ENCODE measurements at regions of chr15 and their contacts with region 1.

Region 1: GRCh38 chr15:90071208-90071807 is 31.0 kb downstream of the IDH2 start:
- DNase-seq: peak; percentile 85
- H3K4me3 Mint-ChIP-seq: no peak overlapping the region
- H3K27ac Mint-ChIP-seq: no peak overlapping the region
- H3K4me1 Mint-ChIP-seq: peaks cover 5% of the 10 kb centered on the region
- H3K27me3 Mint-ChIP-seq: no peaks in the 10 kb centered on the region
- CTCF ChIP-seq: peak; percentile 77

Region 2: GRCh38 chr15:89912674-89913396 is 158.5 kb before region 1 on chr15 and contains the start of gene ARPIN:
- CTCF ChIA-PET with region 1: interaction called, 3 read pairs
- POLR2A ChIA-PET with region 1: interaction called, 9 read pairs
- intact Hi-C with region 1: loop called (anchors 5 kb)
- DNase-seq: peak; percentile 52
- H3K4me3 Mint-ChIP-seq: peak within 1 kb of the TSS; percentile 76
- H3K27ac Mint-ChIP-seq: no peak within 1 kb of the TSS
- H3K4me1 Mint-ChIP-seq: peaks cover 27% of the 10 kb centered on the region
- H3K27me3 Mint-ChIP-seq: no peaks in the 10 kb centered on the region
- CTCF ChIP-seq: no peak
- total RNA-seq, gene ARPIN: 7.1 and 9.9 TPM in 2 replicates

Region 3: DNA sequence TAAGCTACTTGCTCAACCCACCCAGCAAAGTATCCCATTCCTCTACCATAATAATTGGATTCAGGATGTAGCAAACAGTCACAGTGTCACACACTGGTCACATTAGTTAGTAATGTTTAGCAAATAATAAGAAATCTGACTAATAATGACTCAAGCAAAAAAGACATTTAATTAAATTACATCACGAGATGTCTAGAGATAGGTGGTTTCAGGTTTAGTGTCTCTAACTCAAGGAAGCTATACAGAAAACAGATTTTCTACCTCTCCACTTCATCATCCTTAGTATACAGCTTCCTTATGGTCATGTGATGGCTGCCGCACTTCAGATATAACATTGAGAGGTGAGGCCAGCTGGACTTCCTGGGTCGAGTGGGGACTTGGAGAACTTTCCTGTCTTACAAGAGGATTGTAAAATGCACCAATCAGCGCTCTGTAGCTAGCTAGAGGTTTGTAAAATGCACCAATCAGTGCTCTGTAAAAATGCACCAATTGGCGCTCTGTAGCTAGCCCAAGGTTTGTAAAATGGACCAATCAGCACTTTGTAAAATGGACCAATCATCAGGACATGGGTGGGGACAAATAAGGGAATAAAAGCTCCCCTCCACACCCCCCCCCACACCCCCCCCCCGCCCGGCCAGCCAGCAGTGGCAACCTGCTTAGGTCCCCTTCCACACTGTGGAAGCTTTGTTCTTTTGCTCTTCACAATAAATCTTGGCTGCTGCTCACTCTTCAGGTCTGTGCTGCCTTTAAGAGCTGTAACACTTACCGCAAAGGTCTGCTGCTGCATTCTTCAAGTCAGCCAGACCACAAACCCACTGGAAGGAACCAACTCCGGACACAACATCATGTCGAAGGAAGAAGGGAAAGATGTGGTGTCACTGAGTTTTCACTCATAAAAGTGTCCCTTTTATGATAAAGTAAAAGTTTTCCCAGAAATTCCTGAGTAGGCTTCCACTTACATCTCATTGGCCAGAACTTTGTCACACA is 133.7 kb before region 1 on chr15:
- CTCF ChIA-PET with region 1: interaction called, 10 read pairs
- POLR2A ChIA-PET with region 1: no interaction called
- intact Hi-C with region 1: no loop called
- DNase-seq: no peak
- H3K4me3 Mint-ChIP-seq: no peak overlapping the region
- H3K27ac Mint-ChIP-seq: no peak overlapping the region
- H3K4me1 Mint-ChIP-seq: no peaks in the 10 kb centered on the region
- H3K27me3 Mint-ChIP-seq: no peaks in the 10 kb centered on the region
- CTCF ChIP-seq: no peak

Region 4: DNA sequence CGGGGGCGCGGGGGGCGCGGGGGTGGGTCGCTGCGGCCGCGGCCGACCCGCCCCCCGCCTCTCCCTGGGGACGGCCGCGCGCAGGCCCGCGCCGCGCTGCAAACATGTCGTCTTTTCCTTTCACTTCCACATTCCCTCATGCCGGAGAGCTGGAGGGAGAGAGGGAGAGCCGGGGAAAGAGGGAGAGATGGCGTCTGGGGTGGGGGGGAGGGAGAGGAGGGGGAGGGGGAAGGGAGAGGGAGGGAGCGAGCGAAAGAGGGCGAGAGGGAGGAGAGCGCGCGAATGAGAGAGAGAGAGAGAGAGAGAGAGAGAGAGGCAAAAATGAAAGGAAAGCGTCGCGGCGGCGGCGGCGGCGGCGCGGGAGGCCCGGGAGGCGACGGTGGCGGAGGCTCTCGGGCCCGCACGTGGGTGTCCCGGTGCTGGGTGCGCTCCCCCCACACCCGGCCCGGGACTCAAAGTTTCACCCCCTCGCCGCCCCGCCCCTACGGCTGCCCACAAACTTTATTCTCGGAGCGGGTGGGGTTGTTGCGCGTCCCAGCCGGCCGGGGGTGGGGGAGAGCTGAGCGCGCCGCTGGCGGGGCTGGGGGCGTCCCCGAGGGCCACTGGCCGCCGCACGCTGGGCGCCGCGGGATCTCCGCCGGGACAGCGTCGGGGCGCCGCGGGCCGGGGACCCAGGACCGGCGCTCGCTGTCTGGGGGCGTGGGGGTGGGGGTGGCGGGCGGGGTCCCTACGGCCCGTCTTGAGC is 69.5 kb before region 1 on chr15:
- CTCF ChIA-PET with region 1: interaction called, 6 read pairs
- POLR2A ChIA-PET with region 1: interaction called, 49 read pairs
- intact Hi-C with region 1: loop called (anchors 1 kb)
- DNase-seq: peak; percentile 53
- H3K4me3 Mint-ChIP-seq: peak overlapping the region; percentile 92
- H3K27ac Mint-ChIP-seq: peak overlapping the region; percentile 93
- H3K4me1 Mint-ChIP-seq: peaks cover 51% of the 10 kb centered on the region
- H3K27me3 Mint-ChIP-seq: no peaks in the 10 kb centered on the region
- CTCF ChIP-seq: no peak

Region 5: GRCh38 chr15:90013503-90013937 is 57.8 kb before region 1 on chr15:
- CTCF ChIA-PET with region 1: interaction called, 10 read pairs
- POLR2A ChIA-PET with region 1: interaction called, 15 read pairs
- intact Hi-C with region 1: no loop called
- DNase-seq: no peak
- H3K4me3 Mint-ChIP-seq: no peak overlapping the region
- H3K27ac Mint-ChIP-seq: peak overlapping the region; percentile 43
- H3K4me1 Mint-ChIP-seq: peaks cover 34% of the 10 kb centered on the region
- H3K27me3 Mint-ChIP-seq: no peaks in the 10 kb centered on the region
- CTCF ChIP-seq: no peak

Region 6: DNA sequence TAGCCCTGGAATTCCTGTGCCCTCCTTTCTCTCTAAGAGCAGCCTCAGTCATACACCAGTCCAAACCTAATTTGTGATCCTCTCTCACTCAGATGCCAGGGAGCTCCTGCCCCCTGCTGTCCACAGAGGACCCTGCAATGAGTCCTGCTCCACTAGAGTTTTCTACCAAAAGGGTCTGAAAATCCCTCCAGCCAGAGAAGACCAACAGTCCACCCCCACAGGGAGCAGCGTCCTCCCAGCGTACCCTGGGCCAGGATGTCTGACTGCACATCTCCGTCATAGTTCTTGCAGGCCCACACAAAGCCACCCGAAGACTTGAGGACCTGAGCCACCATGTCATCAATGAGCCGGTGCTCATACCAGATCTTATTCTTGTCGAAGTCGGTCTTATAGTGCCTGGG is 15.6 kb after region 1 on chr15:
- CTCF ChIA-PET with region 1: interaction called, 15 read pairs
- POLR2A ChIA-PET with region 1: interaction called, 18 read pairs
- intact Hi-C with region 1: no loop called
- DNase-seq: peak; percentile 76
- H3K4me3 Mint-ChIP-seq: no peak overlapping the region
- H3K27ac Mint-ChIP-seq: no peak overlapping the region
- H3K4me1 Mint-ChIP-seq: no peaks in the 10 kb centered on the region
- H3K27me3 Mint-ChIP-seq: no peaks in the 10 kb centered on the region
- CTCF ChIP-seq: peak; percentile 83

Region 7: DNA sequence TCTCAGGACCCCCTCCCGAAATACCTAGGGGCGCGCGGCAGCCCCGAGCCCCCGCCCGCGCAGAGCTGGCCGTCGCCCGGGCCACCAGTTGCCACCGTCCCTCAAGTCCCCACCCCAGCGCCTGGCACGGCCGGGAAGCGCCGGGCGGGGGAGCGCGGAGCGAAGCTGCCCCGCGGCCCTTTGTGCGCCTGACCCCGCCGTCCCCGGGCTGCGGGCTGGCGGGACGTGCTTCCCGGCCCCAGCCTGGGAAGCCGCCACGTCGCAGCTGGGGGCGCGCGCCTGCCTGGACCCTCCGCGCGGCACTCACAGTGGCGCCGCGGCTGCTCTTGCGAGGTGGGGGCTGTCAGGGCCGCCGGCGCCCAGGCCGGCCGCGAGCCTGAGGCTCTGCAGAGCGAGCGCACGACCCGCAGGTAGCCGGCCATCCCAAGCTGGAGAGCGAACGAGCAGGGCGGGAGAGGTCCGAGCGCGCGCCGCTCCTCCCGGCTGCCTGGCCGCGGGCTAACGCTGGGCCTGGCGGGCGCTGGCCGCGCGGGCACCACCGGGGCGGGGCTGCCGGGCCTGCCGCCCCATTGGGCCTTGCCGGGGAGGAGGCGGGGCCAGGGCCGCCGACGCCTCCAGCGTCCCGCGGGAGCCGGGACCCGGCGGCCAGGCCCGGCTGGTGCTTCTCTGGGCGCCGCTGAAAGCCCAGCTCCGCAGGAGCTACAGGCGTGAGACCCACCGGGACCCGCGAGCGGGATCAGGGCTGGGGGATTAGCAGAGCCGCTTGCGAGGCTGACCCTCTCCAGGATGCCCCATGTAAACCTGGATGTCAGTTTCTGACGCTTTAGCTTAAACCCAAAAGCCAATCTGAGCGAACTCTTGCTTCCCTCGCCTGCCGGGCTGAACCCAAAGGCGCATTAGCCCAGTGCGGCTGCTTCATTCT is 30.9 kb after region 1 on chr15 and contains the start of gene IDH2:
- CTCF ChIA-PET with region 1: interaction called, 4 read pairs
- POLR2A ChIA-PET with region 1: interaction called, 10 read pairs
- intact Hi-C with region 1: no loop called
- DNase-seq: peak; percentile 73
- H3K4me3 Mint-ChIP-seq: peak within 1 kb of the TSS; percentile 55
- H3K27ac Mint-ChIP-seq: no peak within 1 kb of the TSS
- H3K4me1 Mint-ChIP-seq: peaks cover 23% of the 10 kb centered on the region
- H3K27me3 Mint-ChIP-seq: no peaks in the 10 kb centered on the region
- CTCF ChIP-seq: no peak
- total RNA-seq, gene IDH2: 4.2 and 10.2 TPM in 2 replicates

Measured in MCF 10A (cell line).